GM10248 (cell line): ENCODE measurements at regions of chr17 and their contacts with region 1.

Region 1: GRCh38 chr17:9291912-9292560 is 270.7 kb downstream of the NTN1 start:
- DNase-seq: peak; percentile 68
- CTCF ChIP-seq: peak; percentile 68

Region 2: GRCh38 chr17:9115446-9116191 is 176.4 kb before region 1 on chr17:
- CTCF ChIA-PET with region 1: interaction called, 12 read pairs
- POLR2A ChIA-PET with region 1: no interaction called
- DNase-seq: no peak
- CTCF ChIP-seq: peak; percentile 9

Region 3: DNA sequence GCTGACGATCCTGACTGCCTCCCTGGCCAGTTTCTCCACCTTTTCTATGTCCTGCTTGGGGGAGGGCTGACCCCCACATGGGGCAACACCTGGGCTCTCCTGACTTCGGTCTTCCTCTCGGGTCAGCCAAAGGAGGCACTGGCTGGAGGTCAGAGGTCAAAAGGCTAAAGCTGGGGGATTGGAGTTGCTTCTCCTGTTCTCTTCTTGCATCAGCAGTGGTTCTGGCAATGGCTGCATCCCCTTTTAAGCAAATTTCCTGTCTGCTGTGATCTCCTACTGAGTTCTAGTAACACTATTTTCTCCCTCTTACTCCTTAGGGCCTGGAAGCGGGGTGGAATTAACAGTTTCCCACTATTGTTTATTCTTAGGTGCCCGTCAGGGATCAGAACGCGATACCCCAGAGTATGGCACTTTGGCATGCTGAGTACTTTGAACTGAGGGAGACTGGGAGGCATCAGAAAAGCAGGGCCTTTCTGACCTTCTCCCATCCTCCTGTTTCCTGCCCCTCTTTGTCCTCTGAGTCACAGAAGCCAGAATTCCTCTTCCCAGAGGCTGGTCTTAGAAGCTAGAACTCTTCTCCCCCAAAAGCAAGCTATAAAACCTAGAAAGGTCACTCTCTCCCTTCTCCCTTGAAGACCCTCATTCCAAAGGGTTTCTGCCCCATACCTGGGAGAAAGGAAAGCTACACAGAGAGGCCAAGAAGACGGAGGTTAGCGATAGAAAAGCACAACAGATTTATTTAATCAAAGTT is 15.4 kb after region 1 on chr17:
- CTCF ChIA-PET with region 1: interaction called, 12 read pairs
- POLR2A ChIA-PET with region 1: no interaction called
- DNase-seq: no peak
- CTCF ChIP-seq: no peak